GM12878 (cell line): ENCODE measurements at regions of chr18 and their contacts with region 1.

Region 1: DNA sequence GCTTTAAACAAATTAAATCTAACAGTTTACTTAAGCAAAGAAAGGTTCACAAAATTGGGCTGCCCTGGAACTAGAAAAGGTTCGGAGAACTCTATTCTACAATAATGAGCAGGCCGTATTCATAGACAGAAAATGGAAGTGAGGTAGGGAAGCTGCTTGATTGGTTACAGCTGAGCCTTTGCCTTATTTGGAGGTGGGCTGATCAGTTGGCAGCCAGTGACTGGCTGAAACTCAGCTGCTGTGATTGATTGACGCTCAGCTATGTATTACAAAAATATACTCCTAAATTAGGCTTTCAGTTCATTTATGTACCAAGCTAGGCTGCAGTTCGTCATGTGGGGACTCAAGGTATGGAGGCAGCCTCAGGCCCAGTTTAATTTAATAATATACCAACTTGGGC is 42.3 kb upstream of the TTR start:
- DNase-seq: no peak
- ATAC-seq: peak; percentile 51
- H3K4me3 ChIP-seq: no peak overlapping the region
- H3K27ac ChIP-seq: no peak overlapping the region
- H3K4me1 ChIP-seq: no peaks in the 10 kb centered on the region
- H3K27me3 ChIP-seq: no peaks in the 10 kb centered on the region
- CTCF ChIP-seq: no peak
- EP300 ChIP-seq: no peak
- POLR2A ChIP-seq: no peak
- RAD21 ChIP-seq: no peak

Region 2: GRCh38 chr18:31563778-31564177 is 14.4 kb after region 1 on chr18:
- CTCF ChIA-PET with region 1: interaction called, 10 read pairs
- POLR2A ChIA-PET with region 1: interaction called, 4 read pairs
- RAD21 ChIA-PET with region 1: interaction called, 5 read pairs
- SMC1A ChIA-PET with region 1: interaction called, 6 read pairs
- in situ Hi-C with region 1: no loop called
- intact Hi-C with region 1: no loop called
- DNase-seq: no peak
- ATAC-seq: 0 out of 3 replicates have a peak, but pooled peaks have one; percentile 45
- H3K4me3 ChIP-seq: no peak overlapping the region
- H3K27ac ChIP-seq: no peak overlapping the region
- H3K4me1 ChIP-seq: no peaks in the 10 kb centered on the region
- H3K27me3 ChIP-seq: no peaks in the 10 kb centered on the region
- CTCF ChIP-seq: peak in 2 of 3 experiments; percentile 19 to 28; a peak in 2 of 6 replicates
- EP300 ChIP-seq: no peak
- POLR2A ChIP-seq: no peak
- RAD21 ChIP-seq: peak; percentile 44

Region 3: DNA sequence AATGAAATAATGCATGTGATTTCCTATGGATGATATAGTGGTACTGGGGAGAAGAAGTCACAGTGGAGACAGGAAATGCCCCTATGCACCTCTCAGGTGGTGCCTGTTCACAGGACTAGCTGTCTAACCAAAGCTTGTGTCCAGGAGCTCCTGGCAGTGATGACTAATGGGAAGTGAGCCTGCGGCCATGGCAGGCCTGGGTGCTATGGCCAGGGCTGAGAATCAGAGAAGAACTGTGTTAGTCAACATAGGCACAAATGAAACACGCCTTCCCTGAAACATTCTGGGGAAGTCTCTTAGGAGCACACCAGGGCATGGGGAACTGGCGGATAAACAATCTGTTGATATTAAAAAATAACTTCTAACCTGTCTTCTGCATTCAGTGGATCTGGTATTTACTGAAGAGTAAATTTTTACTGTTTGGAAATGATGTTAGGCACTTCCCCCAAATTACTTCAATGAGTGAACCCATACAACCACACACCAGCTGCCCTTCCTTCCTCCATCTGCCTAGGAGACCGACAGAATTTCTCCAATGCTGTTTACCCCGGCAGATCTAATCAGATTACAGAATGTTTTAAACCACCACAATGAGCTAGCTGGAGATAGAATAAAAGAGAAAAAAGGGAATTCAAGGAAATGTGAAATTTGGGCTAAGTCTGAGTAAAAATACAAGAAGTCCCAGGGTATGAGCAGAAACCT is 707.8 kb after region 1 on chr18:
- CTCF ChIA-PET with region 1: no interaction called
- POLR2A ChIA-PET with region 1: no interaction called
- RAD21 ChIA-PET with region 1: no interaction called
- SMC1A ChIA-PET with region 1: no interaction called
- in situ Hi-C with region 1: no loop called
- intact Hi-C with region 1: no loop called
- DNase-seq: no peak
- ATAC-seq: no peak
- H3K4me3 ChIP-seq: no peak overlapping the region
- H3K27ac ChIP-seq: no peak overlapping the region
- H3K4me1 ChIP-seq: no peaks in the 10 kb centered on the region
- H3K27me3 ChIP-seq: no peaks in the 10 kb centered on the region; a peak in 2 of 4 replicates
- CTCF ChIP-seq: no peak
- EP300 ChIP-seq: no peak
- POLR2A ChIP-seq: no peak
- RAD21 ChIP-seq: no peak